ENCODE measurements at regions of chr18 and their contacts with region 1.

Region 1: DNA sequence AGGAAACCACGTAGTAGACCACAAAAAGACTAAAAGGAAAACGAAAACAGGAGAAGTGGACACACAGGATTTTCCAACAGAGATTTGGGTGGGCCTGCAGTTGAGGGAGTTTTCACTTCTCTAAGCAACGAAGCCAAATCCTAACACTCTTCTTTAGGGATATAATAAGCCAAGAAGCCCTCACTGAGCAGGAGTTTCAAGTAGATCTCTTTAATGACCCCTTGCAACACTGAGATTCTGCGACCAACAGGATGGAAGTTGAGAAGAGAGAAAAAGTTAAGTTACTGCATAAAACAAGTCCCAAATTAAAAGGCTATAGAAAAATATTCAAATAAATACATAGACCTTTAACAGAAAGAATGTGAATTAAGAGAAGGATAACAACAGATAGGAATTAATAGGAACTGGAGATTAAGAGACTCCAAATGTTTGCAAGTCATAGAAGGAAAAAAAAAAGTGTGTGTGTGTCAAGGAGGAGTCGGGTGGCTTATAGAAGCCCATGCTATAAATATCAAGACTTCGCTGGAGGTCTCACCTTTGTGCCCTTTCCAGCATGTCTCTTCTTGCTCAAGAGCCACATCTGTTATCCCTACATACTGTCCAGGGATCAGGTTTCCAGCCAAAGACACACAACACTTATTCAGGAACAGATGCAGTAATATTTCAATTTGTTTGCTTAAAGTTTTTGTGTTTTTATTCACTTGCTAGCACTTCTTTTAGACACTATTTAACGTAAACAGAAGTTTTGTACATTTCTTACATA is 69.4 kb upstream of the ARHGAP28 start:
- DNase-seq: no peak
- H3K4me3 ChIP-seq: no peak overlapping the region
- H3K27ac ChIP-seq: no peak overlapping the region
- H3K4me1 ChIP-seq: no peaks in the 10 kb centered on the region
- CTCF ChIP-seq: no peak

Region 2: GRCh38 chr18:6591491-6591890 is 68.7 kb before region 1 on chr18:
- CTCF ChIA-PET with region 1: no interaction called
- POLR2A ChIA-PET with region 1: no interaction called
- intact Hi-C with region 1: loop called (anchors 10 kb)
- DNase-seq: no peak
- H3K4me3 ChIP-seq: no peak overlapping the region
- H3K27ac ChIP-seq: no peak overlapping the region
- H3K4me1 ChIP-seq: no peaks in the 10 kb centered on the region
- CTCF ChIP-seq: no peak

Region 3: GRCh38 chr18:6729247-6730091 is 69.3 kb after region 1 on chr18 and contains the start of gene ARHGAP28:
- CTCF ChIA-PET with region 1: no interaction called
- POLR2A ChIA-PET with region 1: no interaction called
- intact Hi-C with region 1: loop called (anchors 10 kb)
- DNase-seq: no peak
- H3K4me3 ChIP-seq: no peak within 1 kb of the TSS
- H3K27ac ChIP-seq: no peak within 1 kb of the TSS
- H3K4me1 ChIP-seq: no peaks in the 10 kb centered on the region
- CTCF ChIP-seq: no peak
- total RNA-seq, gene ARHGAP28: not detected in 2 replicates

Measured in OCI-LY7 (cell line).